ENCODE measurements at regions of chr18 and their contacts with region 1.

Region 1: GRCh38 chr18:24362758-24363157 is 34.9 kb downstream of the OSBPL1A start:
- DNase-seq: no peak
- H3K4me3 Mint-ChIP-seq: no peak overlapping the region
- H3K27ac Mint-ChIP-seq: no peak overlapping the region
- H3K4me1 Mint-ChIP-seq: no peaks in the 10 kb centered on the region
- H3K27me3 Mint-ChIP-seq: peaks cover 3% of the 10 kb centered on the region

Region 2: GRCh38 chr18:24246143-24246542 is 116.6 kb before region 1 on chr18:
- intact Hi-C with region 1: no loop called
- DNase-seq: peak; percentile 2
- H3K4me3 Mint-ChIP-seq: no peak overlapping the region
- H3K27ac Mint-ChIP-seq: peak overlapping the region; percentile 19
- H3K4me1 Mint-ChIP-seq: no peaks in the 10 kb centered on the region
- H3K27me3 Mint-ChIP-seq: peaks cover 6% of the 10 kb centered on the region

Region 3: DNA sequence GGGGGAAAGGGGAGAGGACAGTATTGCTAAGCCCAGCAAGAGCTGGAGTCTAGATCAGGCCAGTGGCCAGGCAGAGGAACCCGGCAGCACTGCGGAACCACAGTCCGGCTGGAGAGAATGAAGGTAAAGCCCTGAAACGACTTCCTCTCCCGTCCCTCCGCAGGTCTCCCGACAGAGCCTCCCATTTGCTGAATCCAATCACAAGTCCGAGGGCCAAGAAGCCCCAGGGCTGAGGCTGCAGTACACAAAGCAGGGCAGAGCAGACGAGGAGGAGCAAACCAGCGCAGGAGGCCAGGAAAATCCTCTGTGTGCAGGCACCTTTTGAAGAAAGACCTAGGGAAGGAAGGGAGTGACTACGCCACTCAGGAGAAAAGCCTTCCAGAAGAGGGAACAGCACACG is 69.5 kb before region 1 on chr18:
- intact Hi-C with region 1: no loop called
- DNase-seq: no peak
- H3K4me3 Mint-ChIP-seq: no peak overlapping the region
- H3K27ac Mint-ChIP-seq: no peak overlapping the region
- H3K4me1 Mint-ChIP-seq: no peaks in the 10 kb centered on the region
- H3K27me3 Mint-ChIP-seq: peaks cover 15% of the 10 kb centered on the region

Region 4: DNA sequence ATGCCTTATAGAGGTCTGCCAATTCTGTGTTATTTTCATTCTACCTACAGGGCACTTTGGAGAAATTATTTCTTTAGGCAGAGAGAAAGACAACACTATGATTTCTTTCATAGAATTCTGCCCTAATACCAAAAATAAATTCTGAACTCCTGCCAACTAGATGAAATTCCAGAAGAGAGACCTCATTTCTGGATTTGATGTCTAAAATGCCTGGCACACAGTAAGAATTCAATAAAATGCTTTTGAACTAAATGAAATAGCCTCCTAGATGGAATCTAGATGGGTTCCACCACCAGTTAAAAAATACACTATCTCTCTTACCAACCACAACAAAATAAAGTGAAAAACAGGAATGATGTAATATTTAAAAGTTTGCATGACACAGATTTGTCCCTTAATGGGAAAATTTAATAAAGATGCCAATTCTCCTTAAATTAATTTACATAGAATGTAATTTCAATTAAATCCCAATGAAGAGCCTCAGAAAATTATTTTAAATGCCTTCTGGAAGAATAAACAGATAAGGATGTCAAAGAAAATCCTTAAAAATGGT is 40.1 kb before region 1 on chr18:
- intact Hi-C with region 1: no loop called
- DNase-seq: no peak
- H3K4me3 Mint-ChIP-seq: no peak overlapping the region
- H3K27ac Mint-ChIP-seq: no peak overlapping the region
- H3K4me1 Mint-ChIP-seq: no peaks in the 10 kb centered on the region
- H3K27me3 Mint-ChIP-seq: peaks cover 2% of the 10 kb centered on the region

Region 5: GRCh38 chr18:24388957-24389356 is 26.2 kb after region 1 on chr18:
- intact Hi-C with region 1: loop called (anchors 1 kb)
- DNase-seq: no peak
- H3K4me3 Mint-ChIP-seq: no peak overlapping the region
- H3K27ac Mint-ChIP-seq: no peak overlapping the region
- H3K4me1 Mint-ChIP-seq: no peaks in the 10 kb centered on the region
- H3K27me3 Mint-ChIP-seq: peaks cover 6% of the 10 kb centered on the region

Measured in activated T-helper 1 cell treated with anti-CD3 and anti-CD28 coated beads, Interleukin-12 subunit alpha, Interleukin-12 subunit beta, Interleukin-2, Interleukin-4 antibody, amounts not matched to agents 30 ng/mL and 10 ng/mL and 1 ng/mL, durations not matched to agents 14 hours and 24 hours and 36 hours (primary cell).